ENCODE measurements at regions of chr16 and their contacts with region 1.

Region 1: DNA sequence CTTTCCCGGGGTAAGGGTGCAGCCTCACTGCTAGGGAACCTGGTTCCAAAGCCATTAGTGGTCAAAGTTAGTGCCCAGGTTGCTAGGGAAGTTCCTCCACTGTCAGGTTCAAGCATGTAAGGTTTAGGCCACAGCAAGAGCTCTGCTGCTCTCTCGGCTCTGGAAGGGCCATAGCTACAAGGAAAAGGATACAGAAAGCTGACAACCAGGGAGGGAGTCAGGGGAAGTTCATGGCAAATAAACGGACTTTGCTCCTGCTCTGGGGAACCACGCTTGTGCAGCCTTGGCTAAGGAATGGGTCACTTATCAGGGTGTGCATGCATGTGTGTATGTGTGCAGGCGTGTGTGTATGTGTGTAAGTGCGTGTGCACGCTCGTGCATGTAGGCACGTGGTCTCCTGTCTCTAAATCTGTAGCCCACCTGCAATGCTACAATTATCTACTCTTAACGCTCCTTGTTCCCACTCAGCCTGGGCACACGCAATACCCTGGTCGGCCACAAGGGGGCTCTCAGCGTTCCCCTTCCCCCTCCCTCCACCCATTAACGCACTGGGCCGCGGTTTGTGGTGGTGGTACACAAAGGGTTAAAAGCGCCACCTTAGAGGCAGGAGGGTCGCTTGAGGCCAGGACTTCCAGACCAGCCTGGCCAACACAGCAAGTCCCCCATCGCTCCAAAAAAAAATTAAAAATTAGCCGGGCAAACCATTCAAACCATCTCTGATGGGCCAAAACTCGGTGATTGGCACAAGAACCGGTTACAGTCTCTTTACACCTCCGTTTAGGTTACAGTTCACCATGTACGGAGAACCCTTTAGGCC is 48.4 kb upstream of the KDM8 start:
- DNase-seq: peak; percentile 90
- H3K4me3 Mint-ChIP-seq: no peak overlapping the region
- H3K27ac Mint-ChIP-seq: no peak overlapping the region
- H3K4me1 Mint-ChIP-seq: peaks cover 10% of the 10 kb centered on the region
- H3K27me3 Mint-ChIP-seq: peaks cover 5% of the 10 kb centered on the region

Region 2: GRCh38 chr16:27169511-27170071 is 14.7 kb after region 1 on chr16:
- intact Hi-C with region 1: loop called (anchors 1 kb)
- DNase-seq: peak; percentile 88
- H3K4me3 Mint-ChIP-seq: peak overlapping the region; percentile 52
- H3K27ac Mint-ChIP-seq: peak overlapping the region; percentile 74
- H3K4me1 Mint-ChIP-seq: peaks cover 52% of the 10 kb centered on the region
- H3K27me3 Mint-ChIP-seq: peaks cover 2% of the 10 kb centered on the region

Region 3: GRCh38 chr16:27199736-27200135 is 44.8 kb after region 1 on chr16:
- intact Hi-C with region 1: no loop called
- DNase-seq: peak; percentile 86
- H3K4me3 Mint-ChIP-seq: peak overlapping the region; percentile 72
- H3K27ac Mint-ChIP-seq: peak overlapping the region; percentile 90
- H3K4me1 Mint-ChIP-seq: peaks cover 76% of the 10 kb centered on the region
- H3K27me3 Mint-ChIP-seq: peaks cover 2% of the 10 kb centered on the region

Region 4: DNA sequence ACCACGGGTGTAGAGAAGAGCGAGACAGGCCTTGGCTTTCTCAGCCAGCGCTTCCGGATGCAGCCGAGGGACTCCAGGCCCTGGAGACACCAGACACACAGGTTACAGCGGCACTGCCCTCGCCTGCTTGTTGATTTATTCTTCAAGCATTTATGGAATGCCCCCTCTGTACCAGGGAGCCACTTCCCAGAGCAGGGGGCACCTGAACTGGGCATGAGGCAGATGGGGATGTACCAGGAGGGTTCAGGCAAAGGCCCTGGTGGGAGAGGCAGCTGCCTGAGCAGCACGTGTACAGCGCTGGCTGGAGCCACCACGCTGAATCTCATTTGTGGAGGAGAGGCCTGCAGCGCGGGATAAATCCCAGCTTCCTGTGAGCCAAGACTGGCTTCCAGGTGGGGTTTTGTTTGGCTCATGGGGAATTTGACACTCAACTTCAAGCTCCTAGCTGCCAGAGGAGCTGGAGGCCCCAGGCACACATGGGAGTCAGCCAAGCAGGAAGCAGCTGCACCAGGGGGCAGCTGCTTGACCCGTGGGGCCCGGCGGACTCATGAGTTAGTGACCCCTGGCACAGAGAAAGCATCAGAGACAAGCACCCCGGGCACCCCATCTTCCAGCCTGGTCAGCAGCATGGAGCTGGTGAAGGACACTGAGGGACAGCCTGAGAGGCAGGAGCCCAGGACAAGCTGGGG is 306.7 kb after region 1 on chr16:
- intact Hi-C with region 1: loop called (anchors 1 kb)
- DNase-seq: no peak
- H3K4me3 Mint-ChIP-seq: no peak overlapping the region
- H3K27ac Mint-ChIP-seq: no peak overlapping the region
- H3K4me1 Mint-ChIP-seq: peaks cover 17% of the 10 kb centered on the region
- H3K27me3 Mint-ChIP-seq: no peaks in the 10 kb centered on the region